ENCODE measurements at regions of chr11 and their contacts with region 1.

Region 1: DNA sequence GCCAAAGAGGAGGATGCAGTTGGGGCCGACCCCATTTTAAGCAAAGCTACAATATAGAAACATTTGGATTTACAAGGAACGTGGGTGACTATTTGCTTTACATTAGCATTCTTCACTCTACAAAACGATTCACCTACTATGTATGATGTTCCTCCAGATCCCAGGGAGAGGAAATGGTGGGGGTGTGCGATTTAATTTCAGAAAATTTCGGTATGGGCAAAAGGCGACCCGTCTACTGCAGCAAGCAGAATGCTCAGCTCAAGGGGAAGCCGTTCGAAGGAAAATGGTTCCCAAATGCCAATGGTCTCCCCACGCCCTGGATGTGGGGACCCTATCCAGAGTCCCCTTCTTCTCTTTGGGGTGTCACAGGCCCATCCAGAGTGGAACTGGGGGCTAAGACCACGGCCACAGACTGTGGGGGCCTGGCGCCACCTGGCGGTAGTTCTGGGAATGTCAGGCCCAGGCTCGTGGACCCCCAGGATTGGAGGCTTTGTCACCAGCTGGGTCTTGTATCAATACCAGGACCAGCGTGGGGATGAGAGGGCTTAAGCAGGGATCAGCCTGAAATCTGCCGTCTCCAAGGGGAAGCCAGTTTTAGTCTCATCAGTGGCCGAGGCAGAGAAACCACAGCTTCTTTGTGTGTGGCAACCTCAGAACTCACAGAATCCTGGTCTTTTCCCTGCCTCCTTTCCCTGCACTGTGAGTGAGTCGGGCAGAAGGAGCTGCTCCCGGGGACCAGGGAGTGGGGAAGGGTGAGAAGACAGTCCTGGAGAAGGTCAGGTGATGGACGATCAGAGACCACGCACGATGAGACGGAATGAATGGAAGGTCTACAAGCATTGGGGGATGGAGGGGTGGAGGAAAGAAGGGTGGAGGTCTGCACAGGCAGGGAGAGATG is 8.4 kb downstream of the LRRC10B start:
- DNase-seq: peak in 1 of 2 experiments; percentile 50
- H3K4me3 ChIP-seq: no peak overlapping the region
- H3K27ac ChIP-seq: no peak overlapping the region
- H3K4me1 ChIP-seq: peaks cover 24% of the 10 kb centered on the region
- H3K27me3 ChIP-seq: no peaks in the 10 kb centered on the region
- CTCF ChIP-seq: peak; percentile 100

Region 2: DNA sequence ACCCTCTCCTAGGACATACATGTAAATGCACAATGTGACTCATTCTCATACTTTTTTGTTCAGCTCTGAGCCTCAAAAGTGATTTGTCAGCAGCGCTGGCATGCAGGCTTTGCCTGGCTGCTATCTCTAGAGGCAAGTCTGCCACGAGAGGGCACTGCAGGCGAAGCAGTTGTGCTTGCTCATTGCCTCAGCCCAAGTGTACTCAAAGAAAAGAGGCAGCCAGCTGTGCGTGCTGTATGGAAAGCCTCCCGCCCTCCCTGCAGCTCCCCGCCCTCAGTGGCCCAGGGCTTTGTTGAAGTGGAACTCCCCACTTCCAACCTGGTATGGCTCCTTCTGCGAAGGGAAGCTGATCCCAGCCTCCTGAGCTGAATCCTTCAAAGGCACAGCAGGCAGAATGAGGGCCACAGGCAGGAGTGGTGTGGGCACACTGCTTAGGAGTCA is 70.7 kb before region 1 on chr11:
- CTCF ChIA-PET with region 1: interaction called, 20 read pairs
- POLR2A ChIA-PET with region 1: no interaction called
- intact Hi-C with region 1: loop called (anchors 1 kb)
- DNase-seq: peak; percentile 82 to 90
- H3K4me3 ChIP-seq: no peak overlapping the region
- H3K27ac ChIP-seq: no peak overlapping the region
- H3K4me1 ChIP-seq: no peaks in the 10 kb centered on the region
- H3K27me3 ChIP-seq: no peaks in the 10 kb centered on the region
- CTCF ChIP-seq: peak; percentile 91

Region 3: DNA sequence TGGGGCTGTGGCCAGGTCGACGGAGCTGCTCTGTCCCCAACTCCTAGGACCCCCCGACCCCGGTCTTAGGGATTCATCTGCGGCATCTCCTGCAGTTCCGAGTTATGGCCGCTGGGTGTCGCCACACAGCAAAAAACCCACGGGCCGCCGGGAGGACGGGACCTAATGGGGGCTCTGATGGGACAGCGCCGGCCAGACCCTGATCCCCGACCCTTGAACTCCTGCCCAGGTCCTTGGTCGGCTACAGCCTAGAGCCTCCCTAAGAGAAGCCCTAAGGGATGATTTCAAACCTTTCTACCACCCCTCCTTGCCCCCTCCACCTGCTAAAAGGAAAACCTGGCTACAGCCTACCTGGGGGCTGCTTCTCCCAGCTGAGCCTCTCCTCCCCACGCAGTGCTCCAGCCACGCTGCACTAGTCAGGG is 39.2 kb before region 1 on chr11:
- CTCF ChIA-PET with region 1: interaction called, 12 read pairs
- POLR2A ChIA-PET with region 1: no interaction called
- intact Hi-C with region 1: loop called (anchors 1 kb)
- DNase-seq: peak in 1 of 2 experiments; percentile 50
- H3K4me3 ChIP-seq: no peak overlapping the region
- H3K27ac ChIP-seq: no peak overlapping the region
- H3K4me1 ChIP-seq: peaks cover 24% of the 10 kb centered on the region
- H3K27me3 ChIP-seq: no peaks in the 10 kb centered on the region
- CTCF ChIP-seq: peak; percentile 100

Region 4: GRCh38 chr11:62393061-62393611 is 876.2 kb after region 1 on chr11:
- CTCF ChIA-PET with region 1: no interaction called
- POLR2A ChIA-PET with region 1: no interaction called
- intact Hi-C with region 1: no loop called
- DNase-seq: peak; percentile 39 to 87
- H3K4me3 ChIP-seq: no peak overlapping the region
- H3K27ac ChIP-seq: peak overlapping the region; percentile 69
- H3K4me1 ChIP-seq: peaks cover 27% of the 10 kb centered on the region
- H3K27me3 ChIP-seq: no peaks in the 10 kb centered on the region
- CTCF ChIP-seq: peak; percentile 63; the same call in 1 of the 2 replicates

Measured in PC-9 (cell line).